HCT116 (cell line): ENCODE measurements at regions of chr3 and their contacts with region 1.

Region 1: DNA sequence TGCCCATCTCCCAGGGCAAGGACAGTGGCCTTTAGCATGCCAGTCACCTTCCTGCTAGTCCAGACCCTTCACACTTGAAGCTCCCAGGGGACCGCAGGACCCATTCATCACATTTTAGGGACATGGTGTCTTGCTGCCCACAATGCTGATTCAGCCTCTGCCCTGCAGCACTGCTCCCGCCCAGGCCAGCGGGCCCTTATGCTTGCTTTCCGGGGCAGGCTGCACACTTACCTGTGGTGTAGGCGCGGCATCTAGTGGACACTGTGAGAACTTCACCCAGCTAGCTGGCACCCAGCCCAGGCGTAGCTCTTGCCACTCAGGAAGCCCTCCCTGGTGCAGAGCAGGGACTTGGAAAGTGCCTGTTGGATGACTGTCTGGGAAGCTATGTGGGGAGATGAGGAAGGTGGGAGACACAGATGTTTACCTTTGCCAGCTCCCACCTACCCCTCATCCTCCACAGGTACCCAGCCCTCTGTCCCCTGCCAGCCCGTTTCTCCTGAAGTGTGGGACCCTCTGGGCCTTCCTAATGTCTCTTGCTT is 26.2 kb upstream of the NR2C2 start:
- DNase-seq: peak; percentile 65
- ATAC-seq: peak; percentile 92
- H3K4me3 ChIP-seq: no peak overlapping the region
- H3K27ac ChIP-seq: no peak overlapping the region
- H3K4me1 ChIP-seq: peaks cover 0 to 3% of the 10 kb centered on the region in 2 experiments; a peak in 1 of 4 replicates
- H3K27me3 ChIP-seq: no peaks in the 10 kb centered on the region
- CTCF ChIP-seq: peak; percentile 91 to 97 (median 92)
- POLR2A ChIP-seq: no peak
- RAD21 ChIP-seq: peak; percentile 98

Region 2: DNA sequence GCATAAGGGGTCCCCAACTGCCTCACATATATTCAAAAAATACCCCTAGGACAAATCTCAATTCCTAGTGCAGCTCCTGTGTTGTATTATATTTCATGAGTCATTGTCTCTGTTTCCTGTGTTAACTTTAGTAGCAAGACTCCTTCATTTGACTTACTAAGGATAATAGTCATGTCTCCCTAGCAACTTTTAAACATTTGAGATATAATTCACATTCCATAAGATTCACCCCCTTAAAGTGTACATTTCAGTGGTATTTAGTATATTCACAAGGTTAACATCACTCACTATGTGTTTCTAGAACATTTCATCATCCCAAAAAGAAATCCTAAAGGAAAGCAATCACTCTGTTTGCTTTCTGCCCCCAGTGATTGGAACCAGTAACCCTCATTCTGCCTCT is 920.0 kb before region 1 on chr3:
- CTCF ChIA-PET with region 1: no interaction called
- POLR2A ChIA-PET with region 1: no interaction called
- RAD21 ChIA-PET with region 1: no interaction called
- intact Hi-C with region 1: no loop called
- DNase-seq: no peak
- ATAC-seq: no peak
- H3K4me3 ChIP-seq: no peak overlapping the region
- H3K27ac ChIP-seq: no peak overlapping the region
- H3K4me1 ChIP-seq: peaks cover 0 to 9% of the 10 kb centered on the region in 2 experiments; a peak in 2 of 4 replicates
- H3K27me3 ChIP-seq: no peaks in the 10 kb centered on the region
- CTCF ChIP-seq: no peak
- POLR2A ChIP-seq: no peak
- RAD21 ChIP-seq: no peak

Region 3: DNA sequence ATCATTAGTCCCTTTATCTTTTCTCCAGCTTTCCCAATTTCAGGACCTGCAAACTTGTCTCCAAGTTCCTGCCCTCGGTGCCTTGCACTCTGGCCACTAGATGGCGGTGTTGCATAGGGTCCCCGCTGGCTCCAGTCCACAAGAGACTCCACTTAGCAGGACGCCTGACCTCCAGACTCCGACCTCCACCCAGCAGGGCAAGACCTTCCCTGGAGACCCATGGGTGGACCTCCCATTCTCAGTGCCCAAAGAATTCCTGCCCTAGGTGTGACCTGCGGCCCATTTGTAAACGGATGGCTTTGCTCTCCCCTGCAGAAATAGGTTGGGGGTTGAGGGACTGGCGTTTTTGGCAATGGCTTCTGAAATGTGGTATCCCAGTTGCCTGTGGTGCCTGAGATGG is 659.9 kb before region 1 on chr3:
- CTCF ChIA-PET with region 1: interaction called, 4 read pairs
- POLR2A ChIA-PET with region 1: no interaction called
- RAD21 ChIA-PET with region 1: no interaction called
- intact Hi-C with region 1: loop called (anchors 1 kb)
- DNase-seq: peak; percentile 68
- ATAC-seq: peak; percentile 90
- H3K4me3 ChIP-seq: no peak overlapping the region
- H3K27ac ChIP-seq: no peak overlapping the region
- H3K4me1 ChIP-seq: peaks cover 0 to 9% of the 10 kb centered on the region in 2 experiments; a peak in 1 of 4 replicates
- H3K27me3 ChIP-seq: peaks cover 6% of the 10 kb centered on the region; the same call in 1 of the 2 replicates
- CTCF ChIP-seq: peak; percentile 97 to 99 (median 97)
- POLR2A ChIP-seq: no peak
- RAD21 ChIP-seq: peak; percentile 98

Region 4: GRCh38 chr3:14651440-14652251 is 269.5 kb before region 1 on chr3 and contains the start of gene CCDC174:
- CTCF ChIA-PET with region 1: interaction called, 11 read pairs
- POLR2A ChIA-PET with region 1: no interaction called
- RAD21 ChIA-PET with region 1: no interaction called
- intact Hi-C with region 1: no loop called
- DNase-seq: peak; percentile 99
- ATAC-seq: peak; percentile 95
- H3K4me3 ChIP-seq: peak within 1 kb of the TSS; percentile 70 to 98
- H3K27ac ChIP-seq: peak within 1 kb of the TSS; percentile 60
- H3K4me1 ChIP-seq: peaks cover 3 to 16% of the 10 kb centered on the region in 2 experiments; a peak in 3 of 4 replicates
- H3K27me3 ChIP-seq: no peaks in the 10 kb centered on the region
- CTCF ChIP-seq: no peak
- POLR2A ChIP-seq: peak; percentile 63
- RAD21 ChIP-seq: no peak
- total RNA-seq, gene CCDC174: 15.6 TPM

Region 5: DNA sequence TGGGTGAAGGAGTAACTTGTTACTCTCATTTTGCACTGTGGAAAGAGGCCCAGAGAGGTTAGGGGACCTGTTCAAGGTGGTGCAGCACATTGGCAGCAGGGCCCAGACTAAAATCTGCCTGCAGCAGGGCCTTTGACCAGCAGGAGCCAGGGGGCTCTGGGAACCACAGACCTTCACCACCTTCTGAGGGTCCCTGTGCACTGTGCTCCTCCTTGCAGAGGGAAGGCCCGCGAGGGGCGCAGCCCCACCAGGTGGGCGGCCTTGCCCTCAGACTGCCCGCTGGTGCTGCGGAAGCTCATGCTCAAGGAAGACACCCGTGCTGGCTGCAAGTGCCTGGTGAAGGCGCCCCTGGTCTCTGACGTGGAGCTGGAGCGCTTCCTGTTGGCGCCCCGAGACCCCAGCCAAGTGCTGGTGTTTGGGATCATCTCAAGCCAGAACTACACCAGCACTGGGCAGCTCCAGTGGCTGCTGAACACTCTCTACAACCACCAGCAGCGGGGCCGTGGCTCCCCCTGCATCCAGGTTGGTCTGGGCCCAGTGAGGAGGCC is 163.9 kb before region 1 on chr3:
- CTCF ChIA-PET with region 1: no interaction called
- POLR2A ChIA-PET with region 1: no interaction called
- RAD21 ChIA-PET with region 1: no interaction called
- intact Hi-C with region 1: no loop called
- DNase-seq: no peak
- ATAC-seq: no peak
- H3K4me3 ChIP-seq: no peak overlapping the region
- H3K27ac ChIP-seq: no peak overlapping the region
- H3K4me1 ChIP-seq: no peaks in the 10 kb centered on the region
- H3K27me3 ChIP-seq: no peaks in the 10 kb centered on the region
- CTCF ChIP-seq: no peak
- POLR2A ChIP-seq: no peak
- RAD21 ChIP-seq: no peak

Region 6: GRCh38 chr3:14780927-14781507 is 140.1 kb before region 1 on chr3:
- CTCF ChIA-PET with region 1: interaction called, 10 read pairs
- POLR2A ChIA-PET with region 1: no interaction called
- RAD21 ChIA-PET with region 1: interaction called in 1 of 2 experiments, 3 read pairs
- intact Hi-C with region 1: no loop called
- DNase-seq: peak; percentile 74
- ATAC-seq: peak; percentile 100
- H3K4me3 ChIP-seq: no peak overlapping the region
- H3K27ac ChIP-seq: no peak overlapping the region
- H3K4me1 ChIP-seq: no peaks in the 10 kb centered on the region
- H3K27me3 ChIP-seq: no peaks in the 10 kb centered on the region
- CTCF ChIP-seq: peak; percentile 86 to 88 (median 88)
- POLR2A ChIP-seq: no peak
- RAD21 ChIP-seq: peak; percentile 89

Region 7: DNA sequence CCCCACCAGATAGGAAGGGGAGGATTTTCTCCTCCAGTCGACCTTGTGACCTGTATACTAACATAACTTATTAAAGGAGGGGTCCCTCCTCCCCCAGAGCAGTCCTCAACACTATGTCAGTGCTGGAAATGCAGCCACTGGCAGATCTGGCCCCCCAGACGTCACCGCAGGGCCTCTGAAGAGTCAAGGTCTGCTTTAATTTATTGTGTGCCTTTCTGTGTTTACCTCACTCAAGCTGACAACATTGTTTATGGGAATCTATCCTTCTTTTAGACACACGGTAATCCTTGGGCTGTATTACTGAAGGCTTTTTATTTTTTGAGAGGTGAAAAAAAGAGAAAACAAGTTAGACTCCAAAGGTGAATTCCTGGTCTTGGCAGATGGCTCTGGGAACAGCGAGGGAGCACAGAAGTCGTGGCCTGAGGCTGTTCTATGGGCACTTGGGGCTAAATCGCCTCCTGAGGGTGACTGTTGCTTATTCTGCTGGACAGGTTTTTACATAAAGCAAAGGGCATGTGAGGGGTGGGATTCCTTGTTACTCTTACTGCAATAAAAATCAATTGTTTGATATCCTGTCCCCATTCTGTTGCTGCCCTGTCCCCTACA is 12.8 kb after region 1 on chr3:
- CTCF ChIA-PET with region 1: no interaction called
- POLR2A ChIA-PET with region 1: no interaction called
- RAD21 ChIA-PET with region 1: no interaction called
- intact Hi-C with region 1: no loop called
- DNase-seq: no peak
- ATAC-seq: no peak
- H3K4me3 ChIP-seq: no peak overlapping the region
- H3K27ac ChIP-seq: no peak overlapping the region
- H3K4me1 ChIP-seq: no peaks in the 10 kb centered on the region
- H3K27me3 ChIP-seq: no peaks in the 10 kb centered on the region
- CTCF ChIP-seq: no peak
- POLR2A ChIP-seq: no peak
- RAD21 ChIP-seq: no peak

Region 8: DNA sequence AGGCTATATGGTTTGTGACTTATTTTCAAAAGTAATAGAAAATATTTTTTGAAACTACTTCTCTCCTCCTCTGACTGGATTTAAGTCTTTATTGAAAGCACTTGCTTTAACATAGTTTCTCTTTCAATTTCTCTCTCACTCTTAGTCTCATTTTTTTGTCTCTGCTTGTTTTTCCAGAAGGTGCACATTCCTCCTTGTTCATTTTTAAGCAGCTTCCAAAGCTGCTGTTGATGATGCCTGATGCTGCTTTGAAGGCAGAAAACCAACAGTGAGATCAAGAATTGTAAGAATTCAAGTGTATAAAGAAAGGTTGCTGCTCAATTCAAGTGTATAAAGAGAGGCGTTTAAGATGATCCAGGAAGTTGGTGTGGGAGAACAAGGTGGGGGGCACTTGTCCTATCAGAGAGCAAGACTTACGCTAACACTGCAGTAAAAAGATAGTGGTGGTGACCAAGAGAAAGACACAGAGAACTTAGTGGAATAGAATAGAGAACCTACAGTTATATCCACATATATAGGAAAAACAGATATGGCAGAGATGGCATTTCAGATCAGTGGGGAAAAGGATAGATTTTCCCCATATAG is 38.3 kb after region 1 on chr3:
- CTCF ChIA-PET with region 1: no interaction called
- POLR2A ChIA-PET with region 1: no interaction called
- RAD21 ChIA-PET with region 1: no interaction called
- intact Hi-C with region 1: no loop called
- DNase-seq: no peak
- ATAC-seq: no peak
- H3K4me3 ChIP-seq: no peak overlapping the region
- H3K27ac ChIP-seq: no peak overlapping the region
- H3K4me1 ChIP-seq: no peaks in the 10 kb centered on the region
- H3K27me3 ChIP-seq: no peaks in the 10 kb centered on the region
- CTCF ChIP-seq: no peak
- POLR2A ChIP-seq: no peak
- RAD21 ChIP-seq: no peak

Region 9: GRCh38 chr3:15051531-15051930 is 130.4 kb after region 1 on chr3:
- CTCF ChIA-PET with region 1: interaction called, 12 read pairs
- POLR2A ChIA-PET with region 1: no interaction called
- RAD21 ChIA-PET with region 1: no interaction called
- intact Hi-C with region 1: no loop called
- DNase-seq: peak; percentile 32
- ATAC-seq: peak; percentile 99
- H3K4me3 ChIP-seq: no peak overlapping the region
- H3K27ac ChIP-seq: peak overlapping the region; percentile 7; the same call in 1 of the 2 replicates
- H3K4me1 ChIP-seq: no peaks in the 10 kb centered on the region
- H3K27me3 ChIP-seq: no peaks in the 10 kb centered on the region
- CTCF ChIP-seq: peak; percentile 25 to 93 (median 73); a peak in 5 of 6 replicates
- POLR2A ChIP-seq: no peak
- RAD21 ChIP-seq: peak; percentile 36

Region 10: DNA sequence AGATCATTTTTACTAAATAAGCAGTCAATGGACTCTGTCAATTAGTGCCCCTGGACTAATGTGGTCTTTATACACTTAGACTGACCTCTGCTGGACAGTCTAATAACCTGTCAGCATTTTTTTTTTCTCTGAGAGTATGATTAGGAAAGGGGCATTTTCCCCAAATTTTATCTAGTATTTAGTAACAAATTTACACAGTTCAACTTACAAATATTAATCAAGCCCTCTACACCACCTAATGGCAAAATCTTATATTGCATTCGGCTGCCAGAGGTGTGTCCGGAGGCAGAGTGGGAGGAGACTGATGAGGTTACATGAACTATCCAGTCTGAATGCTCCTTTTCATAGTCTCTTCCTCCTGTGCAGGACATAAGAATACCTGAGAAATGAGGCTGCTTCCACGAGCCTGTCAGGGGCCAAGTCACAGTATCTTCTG is 636.4 kb after region 1 on chr3:
- CTCF ChIA-PET with region 1: no interaction called
- POLR2A ChIA-PET with region 1: no interaction called
- RAD21 ChIA-PET with region 1: no interaction called
- intact Hi-C with region 1: loop called (anchors 5 kb)
- DNase-seq: peak; percentile 82
- ATAC-seq: peak; percentile 100
- H3K4me3 ChIP-seq: no peak overlapping the region
- H3K27ac ChIP-seq: peak overlapping the region; percentile 21; the same call in 1 of the 2 replicates
- H3K4me1 ChIP-seq: peaks cover 4 to 6% of the 10 kb centered on the region in 2 experiments; a peak in 3 of 4 replicates
- H3K27me3 ChIP-seq: no peaks in the 10 kb centered on the region
- CTCF ChIP-seq: peak; percentile 47 to 71 (median 62); a peak in 4 of 6 replicates
- POLR2A ChIP-seq: no peak
- RAD21 ChIP-seq: peak; percentile 67